ENCODE measurements at regions of chr15 and their contacts with region 1.

Region 1: DNA sequence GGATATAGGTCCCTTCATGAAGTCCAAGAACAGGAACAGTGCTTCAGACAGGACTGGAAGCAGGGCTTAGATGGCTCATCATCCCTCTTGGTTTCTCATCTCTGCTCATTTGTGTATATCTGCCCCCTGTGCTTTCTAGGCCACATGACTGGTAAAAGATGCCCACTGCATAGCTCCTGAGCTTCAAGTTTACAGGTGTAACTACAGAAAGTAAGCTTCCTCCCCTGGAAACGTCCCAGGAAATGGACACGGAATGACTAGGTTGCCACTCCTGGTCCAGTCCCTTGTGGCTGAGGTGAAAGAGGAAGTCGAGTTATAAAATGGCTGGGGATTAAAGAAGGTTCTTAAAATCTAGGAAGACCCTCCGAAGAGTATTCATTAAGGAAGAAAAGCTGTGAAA is 32.5 kb downstream of the MYO5A start:
- DNase-seq: no peak
- ATAC-seq: no peak
- H3K4me3 ChIP-seq: no peak overlapping the region
- H3K27ac ChIP-seq: peak overlapping the region; percentile 62
- H3K4me1 ChIP-seq: peaks cover 27% of the 10 kb centered on the region
- H3K27me3 ChIP-seq: no peaks in the 10 kb centered on the region
- CTCF ChIP-seq: no peak

Region 2: GRCh38 chr15:52154896-52155865 is 341.0 kb before region 1 on chr15:
- CTCF ChIA-PET with region 1: no interaction called
- POLR2A ChIA-PET with region 1: no interaction called
- intact Hi-C with region 1: no loop called
- DNase-seq: no peak
- ATAC-seq: no peak
- H3K4me3 ChIP-seq: no peak overlapping the region
- H3K27ac ChIP-seq: no peak overlapping the region
- H3K4me1 ChIP-seq: no peaks in the 10 kb centered on the region
- H3K27me3 ChIP-seq: no peaks in the 10 kb centered on the region
- CTCF ChIP-seq: no peak

Region 3: GRCh38 chr15:52370010-52370409 is 126.2 kb before region 1 on chr15:
- CTCF ChIA-PET with region 1: no interaction called
- POLR2A ChIA-PET with region 1: interaction called, 14 read pairs
- intact Hi-C with region 1: no loop called
- DNase-seq: peak; percentile 78
- ATAC-seq: peak; percentile 98
- H3K4me3 ChIP-seq: peak overlapping the region; percentile 52
- H3K27ac ChIP-seq: peak overlapping the region; percentile 81
- H3K4me1 ChIP-seq: peaks cover 24% of the 10 kb centered on the region
- H3K27me3 ChIP-seq: no peaks in the 10 kb centered on the region
- CTCF ChIP-seq: no peak

Region 4: GRCh38 chr15:52735231-52736089 is 239.3 kb after region 1 on chr15:
- CTCF ChIA-PET with region 1: no interaction called
- POLR2A ChIA-PET with region 1: no interaction called
- intact Hi-C with region 1: no loop called
- DNase-seq: peak; percentile 90
- ATAC-seq: peak; percentile 91
- H3K4me3 ChIP-seq: no peak overlapping the region
- H3K27ac ChIP-seq: no peak overlapping the region
- H3K4me1 ChIP-seq: no peaks in the 10 kb centered on the region
- H3K27me3 ChIP-seq: no peaks in the 10 kb centered on the region
- CTCF ChIP-seq: peak; percentile 87